Right ventricle myocardium superior (tissue), 1 donor: ENCODE measurements at regions of chr5 and their contacts with region 1.

Region 1: DNA sequence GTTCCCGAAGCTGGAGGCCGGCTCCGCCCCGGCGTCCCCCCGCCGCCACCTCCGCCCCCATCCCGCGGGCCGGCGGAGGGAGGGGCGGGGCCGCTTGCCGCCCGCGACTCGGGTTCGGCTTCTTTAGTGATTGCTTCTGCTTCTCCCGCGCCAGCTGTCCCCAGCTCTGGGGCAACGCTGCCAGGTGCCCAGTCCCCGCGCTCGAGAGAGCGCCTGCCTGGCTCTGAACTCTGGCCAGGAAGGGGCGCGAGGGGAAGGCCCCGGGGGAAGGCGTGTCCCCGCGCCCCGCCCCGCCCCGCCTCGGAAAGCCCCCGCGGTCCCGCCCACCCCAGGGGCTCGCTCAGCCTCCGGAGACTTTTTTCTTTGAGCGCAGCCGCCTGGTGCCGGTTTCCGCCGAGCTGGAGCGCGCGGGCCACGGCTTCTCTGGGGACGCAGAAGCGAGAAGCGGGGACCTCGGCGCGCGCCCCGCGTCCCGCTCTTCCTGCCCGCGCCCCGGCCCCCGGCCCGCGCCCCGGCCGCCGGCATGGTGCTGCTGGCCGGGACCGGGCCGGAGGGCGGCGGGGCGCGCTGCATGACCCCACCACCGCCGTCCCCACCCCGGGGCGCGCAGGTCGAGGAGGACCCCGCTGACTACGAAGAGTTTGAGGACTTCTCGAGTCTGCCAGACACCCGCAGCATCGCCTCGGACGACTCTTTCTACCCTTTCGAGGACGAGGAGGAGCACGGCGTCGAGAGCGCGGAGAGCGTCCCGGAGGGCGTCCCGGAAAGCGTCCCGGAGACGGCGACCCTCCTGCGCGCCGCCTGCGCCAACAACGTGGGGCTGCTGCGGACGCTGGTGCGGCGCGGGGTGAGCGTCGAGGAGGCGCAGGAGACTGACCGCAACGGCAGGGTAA is at the start of gene ANKRD33B:
- DNase-seq: peak; percentile 77
- ATAC-seq: peak; percentile 74
- total RNA-seq, gene ANKRD33B: 2.9 TPM

Region 2: DNA sequence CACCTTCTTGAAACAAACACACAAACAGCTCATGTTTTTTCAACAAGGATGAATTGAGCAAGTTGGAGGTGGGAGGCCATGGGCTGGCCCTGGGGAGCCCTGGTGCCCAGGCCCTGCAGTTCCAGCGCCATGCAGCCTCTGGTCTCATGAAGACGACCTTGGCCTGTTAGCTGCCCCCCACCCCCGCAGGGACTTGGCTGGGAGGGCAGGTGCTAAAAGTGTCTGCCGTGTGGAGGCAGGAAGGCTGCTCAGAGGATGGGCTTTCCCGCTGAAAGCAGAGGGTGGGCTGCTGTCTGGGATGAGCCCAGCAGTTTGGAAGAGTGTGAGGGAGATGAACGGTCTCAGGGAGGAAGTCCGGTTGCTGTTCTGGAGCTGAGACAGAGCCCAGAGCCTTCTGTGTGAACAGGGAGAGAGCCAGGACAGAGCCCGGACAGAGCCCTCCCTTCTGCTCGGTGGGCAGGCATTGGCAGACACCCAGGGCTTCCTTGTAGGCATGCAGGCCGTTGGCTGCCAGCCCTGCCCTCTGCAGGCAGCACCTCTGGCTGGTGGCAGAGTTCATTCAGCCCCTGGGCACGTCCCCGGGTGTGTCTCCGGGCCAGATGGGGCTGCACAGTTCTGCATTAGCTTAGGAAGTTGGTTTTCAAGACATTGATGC is 103.8 kb before region 1 on chr5:
- intact Hi-C with region 1: loop called (anchors 5 kb)
- DNase-seq: peak; percentile 92
- ATAC-seq: peak; percentile 94

Region 3: DNA sequence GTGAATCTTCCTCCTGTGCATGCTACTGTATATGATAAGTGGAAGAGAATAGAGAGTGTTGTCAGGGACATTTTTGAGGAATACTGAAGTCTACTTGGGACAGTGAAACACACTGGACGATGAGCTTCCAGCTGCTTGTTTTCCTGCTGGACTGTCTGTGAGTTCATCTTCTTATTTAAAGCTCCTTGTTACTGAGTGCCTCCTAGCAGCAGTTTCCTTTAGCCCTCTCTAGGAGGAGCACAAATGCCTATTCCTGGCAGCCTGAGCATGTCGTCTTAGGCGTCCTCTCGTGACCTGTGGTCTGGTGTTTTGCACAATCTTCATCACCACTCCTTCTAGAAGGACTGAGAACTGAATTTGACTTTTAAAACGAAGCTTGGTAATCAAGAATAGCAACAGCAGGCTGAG is 43.5 kb after region 1 on chr5:
- intact Hi-C with region 1: loop called (anchors 5 kb)
- DNase-seq: peak; percentile 62
- ATAC-seq: peak; percentile 91